Calu3 (cell line): ENCODE measurements at regions of chr3 and their contacts with region 1.

Region 1: GRCh38 chr3:140863580-140864009 is 78.0 kb upstream of the SLC25A36 start:
- DNase-seq: peak; percentile 84
- H3K4me3 Mint-ChIP-seq: no peak overlapping the region
- H3K27ac Mint-ChIP-seq: no peak overlapping the region
- H3K4me1 Mint-ChIP-seq: no peaks in the 10 kb centered on the region
- H3K27me3 Mint-ChIP-seq: peaks cover 57% of the 10 kb centered on the region
- CTCF ChIP-seq: peak; percentile 64

Region 2: DNA sequence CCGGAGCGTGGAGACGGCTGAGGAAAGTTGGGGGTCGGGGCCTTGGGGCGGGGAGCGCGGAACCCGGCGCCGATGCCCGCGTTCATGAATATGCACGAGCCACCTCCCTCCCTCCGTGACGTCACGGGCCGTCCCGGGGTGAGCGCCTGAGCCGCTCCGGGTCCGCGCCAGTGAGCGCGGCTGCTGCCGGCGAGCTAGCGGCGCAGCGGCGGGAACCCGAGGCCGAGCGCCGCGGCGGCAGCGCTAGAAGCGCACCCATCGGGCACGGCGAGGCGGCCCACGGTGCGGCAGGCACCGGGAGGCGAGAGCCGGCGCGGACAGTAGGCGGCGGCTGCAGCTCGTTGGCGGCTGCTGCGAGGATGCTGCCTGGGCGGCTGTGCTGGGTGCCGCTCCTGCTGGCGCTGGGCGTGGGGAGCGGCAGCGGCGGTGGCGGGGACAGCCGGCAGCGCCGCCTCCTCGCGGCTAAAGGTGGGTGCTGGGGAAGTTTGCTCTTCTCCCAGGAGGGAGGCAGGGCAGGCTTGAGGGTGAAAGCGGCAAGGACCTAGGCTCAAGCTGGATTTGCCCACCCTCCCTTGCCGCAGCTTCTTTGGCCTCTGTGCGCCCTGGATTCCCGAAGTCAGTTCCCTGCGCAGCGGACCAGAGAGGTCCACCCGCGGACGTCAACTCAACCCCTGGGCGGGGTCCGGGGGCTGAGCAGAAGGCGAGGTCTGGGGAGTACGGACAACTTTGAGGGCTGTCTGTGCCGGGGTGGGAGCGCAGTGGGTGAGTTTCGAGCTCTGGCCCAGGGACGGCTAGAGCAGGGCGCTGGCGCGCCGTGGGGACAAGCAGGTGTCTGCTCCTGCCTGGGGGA is 928.4 kb before region 1 on chr3 and contains the start of gene CLSTN2:
- CTCF ChIA-PET with region 1: no interaction called
- intact Hi-C with region 1: loop called (anchors 2 kb)
- DNase-seq: peak; percentile 63
- H3K4me3 Mint-ChIP-seq: peak within 1 kb of the TSS; percentile 79
- H3K27ac Mint-ChIP-seq: no peak within 1 kb of the TSS
- H3K4me1 Mint-ChIP-seq: peaks cover 12% of the 10 kb centered on the region
- H3K27me3 Mint-ChIP-seq: peaks cover 81% of the 10 kb centered on the region
- CTCF ChIP-seq: no peak
- total RNA-seq, gene CLSTN2: 0.07 TPM in 2 replicates

Region 3: DNA sequence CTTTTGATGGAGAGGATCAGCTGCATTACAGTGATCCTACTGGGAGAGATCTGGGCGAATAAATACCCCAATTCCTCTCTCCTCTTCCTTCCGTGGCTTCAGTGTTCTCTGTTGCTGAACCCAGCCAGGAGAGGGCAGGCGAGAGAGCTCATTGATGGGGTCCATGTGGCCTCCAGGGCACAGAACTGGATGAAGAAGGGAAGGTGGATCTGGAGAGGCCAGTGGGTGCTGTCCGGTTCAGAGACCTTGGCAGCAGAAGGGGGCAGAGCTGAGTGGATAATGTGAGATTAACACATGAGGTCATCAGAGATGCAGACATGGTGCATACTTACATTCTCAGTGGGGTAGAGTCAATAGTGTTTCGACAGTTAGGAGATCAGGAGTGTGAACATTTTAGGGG is 735.0 kb before region 1 on chr3:
- CTCF ChIA-PET with region 1: interaction called, 3 read pairs
- intact Hi-C with region 1: loop called (anchors 1 kb)
- DNase-seq: peak; percentile 73
- H3K4me3 Mint-ChIP-seq: no peak overlapping the region
- H3K27ac Mint-ChIP-seq: no peak overlapping the region
- H3K4me1 Mint-ChIP-seq: no peaks in the 10 kb centered on the region
- H3K27me3 Mint-ChIP-seq: peaks cover 45% of the 10 kb centered on the region
- CTCF ChIP-seq: peak; percentile 83

Region 4: DNA sequence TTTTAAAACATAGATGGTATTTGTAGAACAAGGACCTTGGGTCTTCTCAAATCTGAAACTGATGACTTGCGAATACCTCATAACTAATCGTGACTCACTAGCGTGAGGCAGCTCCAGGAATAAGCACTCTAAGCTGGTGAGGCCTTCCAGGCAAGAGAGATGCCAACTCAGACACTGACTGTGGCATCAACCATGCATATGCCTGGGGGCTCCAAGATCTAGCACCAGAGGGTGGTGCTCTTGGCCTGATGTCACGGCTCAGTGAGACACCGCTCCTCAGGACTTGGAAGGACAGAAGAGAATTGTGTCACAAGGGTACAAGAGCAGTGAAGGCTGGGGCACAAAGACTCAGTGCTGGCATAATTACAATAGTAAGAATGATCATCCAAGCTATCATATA is 310.7 kb before region 1 on chr3:
- CTCF ChIA-PET with region 1: no interaction called
- intact Hi-C with region 1: loop called (anchors 10 kb)
- DNase-seq: no peak
- H3K4me3 Mint-ChIP-seq: no peak overlapping the region
- H3K27ac Mint-ChIP-seq: no peak overlapping the region
- H3K4me1 Mint-ChIP-seq: no peaks in the 10 kb centered on the region
- H3K27me3 Mint-ChIP-seq: peaks cover 45% of the 10 kb centered on the region
- CTCF ChIP-seq: no peak

Region 5: DNA sequence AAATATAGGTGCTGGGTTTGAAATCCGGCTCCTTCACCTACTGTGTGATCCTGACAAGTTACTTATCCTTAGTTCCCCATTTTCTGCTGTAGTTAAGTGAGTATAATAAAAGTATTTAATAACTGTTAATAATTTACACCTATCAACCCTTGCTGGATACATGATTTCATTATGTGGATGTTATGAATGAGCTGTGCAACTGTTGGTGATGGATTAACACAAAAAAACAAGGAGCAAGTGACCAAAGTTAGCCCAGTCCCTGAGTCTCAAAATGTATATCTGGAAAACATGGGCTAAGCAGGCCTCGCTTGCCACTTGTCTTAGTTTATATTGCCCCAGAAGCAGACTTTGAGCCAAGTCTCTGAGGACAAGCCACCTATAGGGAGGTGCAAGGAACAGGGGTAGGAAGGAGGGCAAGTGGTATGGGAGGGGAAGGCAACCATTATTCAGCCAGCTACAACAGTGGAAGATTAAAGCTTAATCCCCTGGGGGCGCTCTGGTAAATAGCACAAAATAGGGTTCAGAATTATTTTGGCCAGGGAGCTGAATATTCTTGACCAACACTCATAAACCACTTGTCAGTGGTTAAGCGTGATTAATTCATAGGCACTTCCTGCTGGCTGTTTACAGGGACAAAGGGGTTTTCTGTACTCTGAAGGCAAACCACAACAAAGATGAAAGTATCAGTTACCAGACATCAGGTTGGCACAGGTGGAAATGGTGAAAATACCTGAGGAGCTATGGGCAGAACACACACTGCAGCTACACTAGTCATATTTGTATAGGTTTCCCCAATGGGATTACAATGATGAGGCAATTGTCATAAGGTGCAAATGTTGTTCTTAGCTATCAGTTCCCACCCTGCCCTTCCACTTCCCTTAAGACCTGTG is 109.5 kb before region 1 on chr3:
- CTCF ChIA-PET with region 1: interaction called, 6 read pairs
- intact Hi-C with region 1: loop called (anchors 1 kb)
- DNase-seq: peak; percentile 54
- H3K4me3 Mint-ChIP-seq: no peak overlapping the region
- H3K27ac Mint-ChIP-seq: peak overlapping the region; percentile 18
- H3K4me1 Mint-ChIP-seq: peaks cover 27% of the 10 kb centered on the region
- H3K27me3 Mint-ChIP-seq: peaks cover 43% of the 10 kb centered on the region
- CTCF ChIP-seq: no peak